Posterior vena cava (tissue), 2 donors: ENCODE measurements at regions of chr4 and their contacts with region 1.

Region 1: DNA sequence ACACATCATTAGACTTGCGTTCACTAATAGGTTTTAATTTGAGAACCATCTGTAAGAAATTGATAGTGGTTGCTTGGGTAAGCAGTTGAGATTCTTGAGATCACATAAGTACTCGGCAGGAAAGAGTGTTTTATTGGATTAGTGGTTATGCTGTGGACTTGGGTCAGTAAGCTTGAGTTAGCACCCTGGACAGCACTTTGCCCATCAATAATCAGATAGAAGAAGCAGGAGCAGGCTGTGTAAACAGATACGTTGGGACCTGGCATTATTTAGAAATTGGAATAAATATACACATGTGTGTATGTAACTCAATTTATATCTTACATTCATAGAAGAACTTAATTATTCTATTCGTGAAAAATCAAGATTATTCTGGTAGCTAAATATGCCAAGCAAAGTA is 357.5 kb upstream of the SMIM31 start:
- DNase-seq: no peak

Region 2: DNA sequence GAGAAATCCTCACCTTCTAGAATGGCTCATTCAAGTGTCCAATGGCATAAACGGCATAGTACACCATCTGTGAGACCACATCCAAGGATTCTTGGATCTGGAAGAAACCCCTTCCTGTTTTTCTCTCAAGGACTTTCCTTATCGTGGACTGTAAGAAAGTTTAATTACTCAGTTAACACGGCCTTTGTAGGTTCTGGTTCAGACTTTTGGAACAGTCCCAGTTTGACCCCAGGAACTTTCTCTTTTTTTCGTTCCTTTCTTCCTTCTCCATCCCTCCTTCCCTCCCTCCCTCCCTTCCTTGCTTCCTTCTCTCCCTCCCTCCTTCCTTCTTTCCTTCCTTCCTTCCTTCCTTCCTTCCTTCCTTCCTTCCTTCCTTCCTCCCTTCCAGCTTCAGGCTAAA is 14.0 kb after region 1 on chr4:
- intact Hi-C with region 1: loop called in 1 of 2 experiments (anchors 1 kb)
- DNase-seq: no peak

Region 3: GRCh38 chr4:165234766-165235165 is 838.3 kb after region 1 on chr4:
- intact Hi-C with region 1: no loop called
- DNase-seq: no peak